Left cardiac atrium (tissue), 4 donors: ENCODE measurements at regions of chr15 and their contacts with region 1.

Region 1: GRCh38 chr15:74251131-74251811 is 15.1 kb downstream of the CCDC33 start:
- DNase-seq: peak; percentile 79
- ATAC-seq: peak; percentile 96 to 97

Region 2: DNA sequence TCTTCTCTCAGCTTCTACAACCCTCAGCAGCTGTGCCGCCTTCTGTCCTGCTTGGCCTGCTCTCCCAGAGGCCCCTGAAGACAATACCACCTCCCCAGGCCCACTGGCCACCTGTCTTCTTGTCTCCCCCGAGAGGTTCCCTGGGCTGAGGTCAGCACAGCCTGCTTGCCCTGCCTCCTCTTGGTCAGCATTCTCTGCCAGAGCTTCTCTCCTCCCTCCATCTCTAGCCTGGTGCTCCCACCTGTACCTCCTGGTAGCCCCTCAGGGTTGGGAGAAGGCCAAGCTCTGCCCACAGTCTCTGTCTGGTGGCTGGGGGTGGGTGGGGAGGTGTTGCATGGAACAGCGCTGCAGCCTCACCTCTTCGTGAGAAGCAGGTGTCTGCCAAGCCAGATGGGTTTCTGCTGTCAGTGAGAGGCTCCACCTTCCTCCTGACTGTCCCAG is 83.4 kb before region 1 on chr15:
- intact Hi-C with region 1: loop called in 1 of 2 experiments (anchors 5 kb)
- DNase-seq: no peak
- ATAC-seq: no peak